Astrocyte of the cerebellum (primary cell): ENCODE measurements at regions of chr4 and their contacts with region 1.

Region 1: GRCh38 chr4:147524601-147525000 is 43.7 kb downstream of the EDNRA start:
- DNase-seq: no peak
- H3K4me3 ChIP-seq: no peak overlapping the region
- CTCF ChIP-seq: no peak

Region 2: GRCh38 chr4:147550626-147551250 is 26.1 kb after region 1 on chr4:
- in situ Hi-C with region 1: loop called (anchors 5 kb)
- DNase-seq: peak; percentile 34
- H3K4me3 ChIP-seq: no peak overlapping the region
- CTCF ChIP-seq: no peak